ENCODE measurements at regions of chr17 and their contacts with region 1.

Region 1: DNA sequence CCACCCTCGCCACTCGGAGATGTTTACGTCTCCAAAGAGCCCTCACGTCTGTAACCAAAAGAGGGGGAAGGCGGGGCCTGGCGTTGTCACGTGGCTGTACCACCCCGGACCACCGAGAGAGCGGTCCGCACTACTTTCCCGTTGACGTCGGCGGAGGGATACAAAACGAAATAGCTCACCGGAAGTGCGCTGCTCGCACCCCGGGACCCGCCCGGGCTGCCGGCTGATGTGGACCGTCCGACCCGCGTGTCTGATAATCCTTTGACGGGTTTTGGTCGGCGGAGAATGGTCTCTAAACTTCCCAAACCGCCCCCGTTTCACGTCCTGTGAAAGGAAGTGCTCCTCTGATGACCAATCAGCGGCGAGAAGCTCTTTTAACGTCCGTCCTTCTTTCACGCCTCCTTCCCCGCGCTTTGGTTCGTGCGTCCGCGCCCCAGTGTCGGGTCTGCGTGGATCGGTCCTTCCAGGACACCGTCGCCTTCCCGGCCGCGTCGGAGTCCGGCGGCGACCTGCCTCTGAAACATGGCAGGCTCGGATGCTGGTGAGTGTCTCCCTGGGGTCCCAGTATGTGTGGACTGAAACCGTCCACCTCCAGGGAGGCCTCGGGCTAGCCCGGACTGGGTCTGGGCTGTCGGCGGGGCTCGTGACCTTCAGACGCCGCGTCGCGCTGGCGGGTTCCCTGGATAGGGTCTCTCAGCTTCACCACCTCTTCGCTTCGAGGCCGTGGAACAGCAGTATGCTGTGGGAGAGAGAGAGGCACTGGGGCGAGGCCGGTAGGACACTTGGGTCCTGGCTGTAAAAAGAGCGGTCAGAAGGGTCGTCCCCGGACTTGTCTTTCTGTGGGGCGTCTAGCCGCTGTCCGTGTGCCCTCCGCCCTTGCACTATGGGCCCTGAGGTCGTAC is at the start of gene CEP95:
- DNase-seq: peak; percentile 90 to 99 (median 96)
- ATAC-seq: peak; percentile 64
- H3K4me3 ChIP-seq: peak within 1 kb of the TSS; percentile 99 to 100
- H3K4me3 Mint-ChIP-seq: peak within 1 kb of the TSS; percentile 100
- H3K27ac ChIP-seq: peak within 1 kb of the TSS; percentile 100
- H3K27ac Mint-ChIP-seq: peak within 1 kb of the TSS; percentile 100
- H3K4me1 ChIP-seq: peaks cover 44% of the 10 kb centered on the region
- H3K4me1 Mint-ChIP-seq: peaks cover 62% of the 10 kb centered on the region
- H3K27me3 ChIP-seq: no peaks in the 10 kb centered on the region
- H3K27me3 Mint-ChIP-seq: no peaks in the 10 kb centered on the region
- CTCF ChIP-seq: no peak
- total RNA-seq, gene CEP95: 248 to 282 TPM

Region 2: DNA sequence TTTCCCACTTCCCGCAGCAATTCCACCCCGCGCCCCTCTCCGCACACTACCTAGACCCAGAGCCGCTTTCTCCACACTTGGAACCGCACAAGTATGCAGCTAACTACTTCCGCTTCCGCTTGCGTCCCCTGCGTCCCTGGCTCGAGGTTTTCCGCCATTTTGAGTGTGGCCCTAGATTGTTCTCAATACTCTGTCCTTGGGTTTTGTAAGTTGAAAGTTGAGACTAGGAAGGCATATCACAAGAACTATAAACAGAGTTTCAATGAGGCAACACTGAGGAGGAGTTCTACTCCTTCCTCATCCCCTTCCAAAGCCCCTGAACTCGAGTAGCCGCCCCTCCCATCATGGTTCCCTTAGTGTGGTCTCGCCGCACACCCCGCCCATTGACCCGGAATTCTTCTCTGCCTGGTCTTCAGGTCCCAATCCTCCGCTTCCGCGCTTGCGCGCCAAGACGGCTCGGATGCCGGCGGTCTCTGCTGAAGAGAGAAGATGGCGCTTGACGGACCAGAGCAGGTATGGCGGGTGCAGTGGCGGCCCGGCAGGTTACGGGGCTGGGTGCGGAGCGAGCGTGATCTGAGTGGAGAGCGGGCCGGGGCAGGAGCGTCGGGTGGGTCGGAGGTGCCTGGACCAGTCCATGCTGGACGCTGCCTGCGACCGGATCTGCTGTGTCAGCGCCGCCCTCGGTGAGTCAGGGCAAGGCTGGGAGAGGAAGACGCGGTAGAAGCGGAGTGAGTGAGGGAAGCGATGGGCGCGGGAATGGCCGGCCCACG is 679.6 kb before region 1 on chr17 and contains the starts of genes FTSJ3 and PSMC5:
- CTCF ChIA-PET with region 1: no interaction called
- POLR2A ChIA-PET with region 1: interaction called, 3 read pairs
- intact Hi-C with region 1: loop called (anchors 1 to 5 kb)
- DNase-seq: peak; percentile 91 to 99 (median 95)
- ATAC-seq: peak; percentile 92
- H3K4me3 ChIP-seq: peak within 1 kb of the TSS; percentile 74 to 75
- H3K4me3 Mint-ChIP-seq: peak within 1 kb of the TSS; percentile 100
- H3K27ac ChIP-seq: peak within 1 kb of the TSS; percentile 66 to 96
- H3K27ac Mint-ChIP-seq: peak within 1 kb of the TSS; percentile 98
- H3K4me1 ChIP-seq: peaks cover 56% of the 10 kb centered on the region
- H3K4me1 Mint-ChIP-seq: peaks cover 81% of the 10 kb centered on the region
- H3K27me3 ChIP-seq: no peaks in the 10 kb centered on the region
- H3K27me3 Mint-ChIP-seq: no peaks in the 10 kb centered on the region
- CTCF ChIP-seq: peak; percentile 51
- total RNA-seq, gene FTSJ3: 60.0 to 70.3 TPM
- total RNA-seq, gene PSMC5: 88.5 to 90.3 TPM

Region 3: DNA sequence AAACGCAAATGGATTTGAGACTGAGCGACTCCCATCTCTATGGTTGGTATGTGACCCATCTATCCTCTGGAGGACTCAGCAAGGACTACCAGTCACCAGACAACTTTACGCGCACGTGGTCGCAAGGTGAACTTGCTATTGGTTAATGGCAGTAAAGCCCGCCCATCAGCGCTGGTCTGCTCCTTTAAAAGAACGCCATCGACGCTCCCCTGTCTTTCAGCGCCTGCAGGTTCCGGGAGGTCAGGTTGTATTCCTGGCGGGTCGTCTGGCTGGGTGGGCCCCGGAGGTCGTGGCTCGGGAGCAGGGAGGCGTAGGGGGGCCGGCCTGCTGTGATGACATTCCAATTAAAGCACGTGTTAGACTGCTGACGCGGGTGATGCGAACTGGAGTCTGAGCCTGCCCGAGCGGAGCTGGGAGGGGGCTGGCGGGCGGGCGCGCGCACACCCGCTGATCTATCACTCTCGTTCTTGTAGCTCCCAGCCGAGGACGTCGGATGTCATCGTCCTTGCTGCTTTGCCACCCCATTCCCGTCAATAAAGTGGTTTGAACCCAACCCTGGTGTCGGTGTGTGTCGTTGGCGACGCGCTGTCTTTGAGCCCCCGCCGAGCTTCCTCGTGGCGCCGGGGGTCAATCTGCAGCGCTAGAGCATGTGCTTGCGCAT is 360.9 kb before region 1 on chr17:
- CTCF ChIA-PET with region 1: no interaction called
- POLR2A ChIA-PET with region 1: interaction called, 42 read pairs
- intact Hi-C with region 1: loop called in 1 of 2 experiments (anchors 1 kb)
- DNase-seq: peak; percentile 88 to 99 (median 95)
- ATAC-seq: peak; percentile 88
- H3K4me3 ChIP-seq: peak overlapping the region; percentile 74 to 95
- H3K4me3 Mint-ChIP-seq: no peak overlapping the region
- H3K27ac ChIP-seq: peak overlapping the region; percentile 89 to 91
- H3K27ac Mint-ChIP-seq: no peak overlapping the region
- H3K4me1 ChIP-seq: peaks cover 16% of the 10 kb centered on the region
- H3K4me1 Mint-ChIP-seq: peaks cover 27% of the 10 kb centered on the region
- H3K27me3 ChIP-seq: no peaks in the 10 kb centered on the region
- H3K27me3 Mint-ChIP-seq: no peaks in the 10 kb centered on the region
- CTCF ChIP-seq: no peak

Region 4: DNA sequence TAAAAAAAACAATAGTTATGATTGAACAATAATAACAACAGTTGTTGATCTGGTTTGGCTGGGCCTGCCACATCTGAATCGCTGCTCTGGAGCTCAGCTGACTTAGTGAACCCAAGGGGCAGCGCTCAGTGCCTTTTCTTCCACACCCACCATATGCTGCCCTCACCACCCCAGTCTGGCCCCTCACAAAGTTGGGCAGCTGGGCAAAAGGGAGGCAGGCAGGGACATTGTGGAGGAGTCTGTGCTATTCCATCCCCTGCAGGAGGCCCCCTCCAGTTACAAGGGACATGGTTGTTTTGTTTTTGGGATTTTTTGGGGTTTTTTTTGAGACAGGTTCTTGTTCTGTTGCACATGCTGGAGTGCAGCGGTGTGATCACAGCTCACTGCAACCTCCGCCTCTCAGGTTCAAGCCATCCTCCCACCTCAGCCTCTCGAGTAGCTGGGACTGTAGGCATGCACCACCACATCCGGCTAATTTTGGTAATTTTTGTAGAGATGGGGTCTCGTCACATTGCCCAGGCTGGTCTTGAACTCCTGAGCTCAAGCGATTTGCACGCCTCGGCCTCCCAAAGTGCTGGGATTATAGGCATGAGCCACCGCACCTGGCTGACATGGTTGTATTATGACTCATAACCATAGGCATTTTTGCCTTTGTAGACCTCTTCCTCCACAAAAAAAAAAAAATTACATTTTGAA is 107.6 kb before region 1 on chr17:
- CTCF ChIA-PET with region 1: no interaction called
- POLR2A ChIA-PET with region 1: interaction called, 77 read pairs
- intact Hi-C with region 1: no loop called
- DNase-seq: peak in 2 of 9 experiments; percentile 26 to 30
- ATAC-seq: no peak
- H3K4me3 ChIP-seq: no peak overlapping the region
- H3K4me3 Mint-ChIP-seq: peak overlapping the region; percentile 42
- H3K27ac ChIP-seq: peak overlapping the region in 1 of 2 experiments; percentile 40
- H3K27ac Mint-ChIP-seq: peak overlapping the region; percentile 64
- H3K4me1 ChIP-seq: peaks cover 57% of the 10 kb centered on the region
- H3K4me1 Mint-ChIP-seq: peaks cover 50% of the 10 kb centered on the region
- H3K27me3 ChIP-seq: no peaks in the 10 kb centered on the region
- H3K27me3 Mint-ChIP-seq: no peaks in the 10 kb centered on the region
- CTCF ChIP-seq: no peak

Region 5: GRCh38 chr17:64648234-64648633 is 141.4 kb after region 1 on chr17:
- CTCF ChIA-PET with region 1: interaction called, 3 read pairs
- POLR2A ChIA-PET with region 1: no interaction called
- intact Hi-C with region 1: loop called in 1 of 2 experiments (anchors 2 kb)
- DNase-seq: no peak
- ATAC-seq: no peak
- H3K4me3 ChIP-seq: no peak overlapping the region
- H3K4me3 Mint-ChIP-seq: no peak overlapping the region
- H3K27ac ChIP-seq: no peak overlapping the region
- H3K27ac Mint-ChIP-seq: no peak overlapping the region
- H3K4me1 ChIP-seq: peaks cover 7% of the 10 kb centered on the region
- H3K4me1 Mint-ChIP-seq: peaks cover 51% of the 10 kb centered on the region
- H3K27me3 ChIP-seq: no peaks in the 10 kb centered on the region
- H3K27me3 Mint-ChIP-seq: no peaks in the 10 kb centered on the region
- CTCF ChIP-seq: no peak